ENCODE measurements at regions of chr7 and their contacts with region 1.

Region 1: DNA sequence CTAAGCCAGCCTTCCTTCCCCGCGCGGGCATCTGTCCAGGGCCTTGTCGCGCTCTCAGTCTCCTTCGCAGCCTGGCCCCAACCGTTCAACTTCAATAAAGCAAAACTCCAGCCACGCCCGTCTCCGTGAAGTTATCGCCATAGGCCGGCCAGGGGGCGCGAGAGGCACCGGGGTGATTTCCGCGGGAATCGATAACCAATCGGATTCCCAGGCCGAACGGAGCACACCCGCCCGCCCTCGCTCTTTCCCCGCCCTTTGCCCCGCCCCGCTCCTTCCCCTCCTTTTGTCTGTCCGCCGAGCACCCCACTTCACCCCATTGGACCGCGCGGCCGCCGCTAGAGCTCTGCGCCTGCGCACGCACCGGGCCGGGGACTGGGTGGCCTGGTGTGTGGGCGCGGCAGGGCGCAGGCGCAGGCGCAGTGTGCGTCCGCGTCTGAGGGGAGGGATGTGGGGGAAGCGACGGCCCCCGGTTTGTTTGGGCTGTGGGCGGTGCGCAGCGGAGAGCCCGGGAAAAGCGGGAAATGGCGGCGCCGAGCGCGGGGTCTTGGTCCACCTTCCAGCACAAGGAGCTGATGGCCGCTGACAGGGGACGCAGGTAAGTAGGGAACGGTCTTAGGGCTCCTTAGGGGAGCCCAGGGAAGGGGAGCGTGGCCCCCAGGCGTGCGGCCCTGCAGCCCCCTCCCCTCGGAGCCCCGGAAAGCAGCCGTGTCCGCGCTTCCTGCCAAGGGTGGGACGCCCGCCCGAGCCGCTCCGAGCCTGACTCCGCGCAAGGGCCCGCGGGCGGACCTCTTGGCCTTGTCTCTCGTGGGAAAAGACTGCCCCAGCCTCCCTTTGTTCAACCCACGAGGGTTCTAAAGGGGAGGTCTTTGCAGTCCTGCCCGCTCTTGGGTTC is at the start of gene CASP2:
- DNase-seq: peak; percentile 96
- H3K4me3 ChIP-seq: peak within 1 kb of the TSS; percentile 80 to 84
- H3K27ac ChIP-seq: peak within 1 kb of the TSS; percentile 76
- H3K4me1 ChIP-seq: no peaks in the 10 kb centered on the region
- H3K27me3 ChIP-seq: no peaks in the 10 kb centered on the region
- CTCF ChIP-seq: peak in 3 of 4 experiments; percentile 23 to 24 (median 23)
- POLR2A ChIP-seq: peak; percentile 86
- total RNA-seq, gene CASP2: 19.6 to 20.2 TPM

Region 2: GRCh38 chr7:143305423-143306070 is 17.4 kb after region 1 on chr7:
- intact Hi-C with region 1: no loop called
- DNase-seq: peak; percentile 85
- H3K4me3 ChIP-seq: no peak overlapping the region
- H3K27ac ChIP-seq: no peak overlapping the region
- H3K4me1 ChIP-seq: peaks cover 6% of the 10 kb centered on the region
- H3K27me3 ChIP-seq: no peaks in the 10 kb centered on the region
- CTCF ChIP-seq: peak; percentile 37 to 91 (median 77)
- POLR2A ChIP-seq: no peak

Region 3: GRCh38 chr7:143380255-143380645 is 92.1 kb after region 1 on chr7:
- intact Hi-C with region 1: loop called (anchors 5 kb)
- DNase-seq: peak; percentile 84
- H3K4me3 ChIP-seq: peak overlapping the region; percentile 82 to 89
- H3K27ac ChIP-seq: peak overlapping the region; percentile 97 to 99
- H3K4me1 ChIP-seq: peaks cover 5% of the 10 kb centered on the region
- H3K27me3 ChIP-seq: no peaks in the 10 kb centered on the region
- CTCF ChIP-seq: peak; percentile 84 to 91 (median 90)
- POLR2A ChIP-seq: peak; percentile 23

Region 4: DNA sequence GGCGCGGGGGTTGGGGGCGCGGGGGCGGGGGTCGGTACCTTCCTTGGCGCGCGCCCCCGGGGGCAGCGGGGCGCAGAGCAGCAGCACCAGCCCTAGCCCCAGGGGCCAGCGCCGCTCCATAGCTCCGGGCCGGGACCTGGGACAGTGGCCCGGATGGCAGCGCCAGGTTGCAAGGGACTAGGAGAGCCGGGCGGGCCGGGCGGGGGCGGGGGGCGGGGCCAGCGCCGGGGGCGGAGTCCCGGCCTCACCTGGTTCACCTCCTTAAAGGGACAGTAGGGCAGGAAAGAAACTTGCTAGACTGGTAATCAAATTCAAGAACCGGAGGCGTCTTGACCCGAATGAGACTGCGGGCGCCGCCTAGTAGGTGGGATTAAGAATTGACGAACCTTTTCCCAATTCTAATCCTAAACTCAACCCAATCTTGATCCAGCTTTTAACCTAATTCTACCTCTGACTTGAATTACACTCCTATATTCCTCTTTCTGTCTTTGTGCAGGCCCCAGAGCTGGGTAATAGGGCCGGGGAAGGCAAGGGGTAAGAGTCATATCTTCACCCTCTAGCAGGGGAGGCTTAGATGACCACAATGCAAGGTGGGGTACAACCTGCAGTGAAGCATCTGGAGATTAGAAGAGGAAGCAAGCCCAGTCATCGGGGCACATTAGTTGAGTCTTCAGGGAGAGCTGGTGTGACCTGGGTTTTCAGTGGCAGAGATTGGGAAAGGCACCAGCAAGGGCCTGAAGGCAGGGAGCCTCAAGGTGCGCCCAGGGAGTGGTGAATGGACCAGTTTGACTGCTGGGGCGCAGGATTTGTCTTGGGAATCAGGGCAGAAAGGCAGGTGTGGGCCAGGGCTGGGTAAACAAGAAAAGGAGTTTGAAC is 120.7 kb after region 1 on chr7 and contains the start of gene EPHA1:
- intact Hi-C with region 1: loop called (anchors 5 kb)
- DNase-seq: peak; percentile 77
- H3K4me3 ChIP-seq: peak within 1 kb of the TSS; percentile 53
- H3K27ac ChIP-seq: peak within 1 kb of the TSS; percentile 52 to 58
- H3K4me1 ChIP-seq: no peaks in the 10 kb centered on the region
- H3K27me3 ChIP-seq: no peaks in the 10 kb centered on the region
- CTCF ChIP-seq: peak in 3 of 4 experiments; percentile 47 to 60 (median 59)
- POLR2A ChIP-seq: no peak
- total RNA-seq, gene EPHA1: 10.5 to 15.7 TPM